ENCODE measurements at regions of chr7 and their contacts with region 1.

Region 1: GRCh38 chr7:41351091-41351490 is 351.8 kb downstream of the INHBA start:
- DNase-seq: no peak
- H3K4me3 ChIP-seq: no peak overlapping the region
- H3K27ac ChIP-seq: no peak overlapping the region
- H3K4me1 ChIP-seq: no peaks in the 10 kb centered on the region
- H3K27me3 ChIP-seq: no peaks in the 10 kb centered on the region
- CTCF ChIP-seq: no peak

Region 2: DNA sequence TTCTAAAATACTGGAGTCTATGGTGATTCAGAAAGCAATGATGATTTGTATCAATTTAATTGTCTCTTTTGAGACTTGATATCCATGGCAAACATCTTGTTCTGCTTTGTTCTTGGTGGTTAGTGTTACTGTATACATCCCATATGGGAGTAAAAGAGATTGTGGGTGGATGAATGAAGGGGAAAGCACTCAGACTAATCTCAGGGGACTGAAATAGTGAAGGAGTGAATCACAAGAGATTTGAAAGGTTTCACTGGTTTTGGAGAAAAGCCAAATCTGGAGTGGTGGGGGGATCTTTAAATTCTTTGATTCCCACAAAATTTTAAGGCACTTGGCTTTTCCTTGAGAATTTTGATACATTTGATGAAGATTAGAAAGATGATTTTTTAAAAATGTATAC is 17.6 kb before region 1 on chr7:
- CTCF ChIA-PET with region 1: no interaction called
- POLR2A ChIA-PET with region 1: no interaction called
- intact Hi-C with region 1: loop called (anchors 2 kb)
- DNase-seq: no peak
- H3K4me3 ChIP-seq: no peak overlapping the region
- H3K27ac ChIP-seq: no peak overlapping the region
- H3K4me1 ChIP-seq: no peaks in the 10 kb centered on the region
- H3K27me3 ChIP-seq: no peaks in the 10 kb centered on the region
- CTCF ChIP-seq: no peak